ENCODE measurements at regions of chr2 and their contacts with region 1.

Region 1: DNA sequence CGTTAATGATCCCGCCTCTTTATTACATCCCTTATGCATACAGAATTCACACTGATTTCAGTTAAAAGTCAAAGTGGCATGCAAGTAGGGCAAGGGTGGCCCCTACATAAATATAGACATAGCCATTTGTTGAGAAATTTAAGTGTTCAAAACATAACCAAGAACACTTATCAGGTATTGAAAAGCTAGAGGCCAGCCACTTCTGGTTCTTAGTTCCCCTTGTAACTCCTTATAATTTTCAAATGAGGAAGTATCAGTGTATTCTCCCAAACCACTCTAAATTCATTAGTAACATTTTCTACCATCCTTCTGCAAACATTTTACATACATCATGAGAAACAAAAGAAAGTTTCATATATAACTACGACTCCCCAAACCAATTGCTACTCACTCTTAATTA is 5.8 kb upstream of the ARL5A start:
- DNase-seq: no peak
- ATAC-seq: no peak
- H3K4me3 ChIP-seq: no peak overlapping the region
- H3K27ac ChIP-seq: no peak overlapping the region
- H3K4me1 ChIP-seq: peaks cover 0 to 9% (median 3%) of the 10 kb centered on the region in 12 donors
- H3K27me3 ChIP-seq: no peaks in the 10 kb centered on the region
- CTCF ChIP-seq: no peak
- POLR2A ChIP-seq: no peak

Region 2: GRCh38 chr2:151918308-151918707 is 84.3 kb after region 1 on chr2:
- intact Hi-C with region 1: loop called in 1 of 10 experiments (anchors 5 kb)
- DNase-seq: peak in 1 of 5 donors; percentile 28
- ATAC-seq: peak; percentile 45 to 85 (median 82)
- H3K4me3 ChIP-seq: no peak overlapping the region
- H3K27ac ChIP-seq: peak overlapping the region in 1 of 12 donors; percentile 53
- H3K4me1 ChIP-seq: peaks cover 0 to 61% (median 17%) of the 10 kb centered on the region in 12 donors
- H3K27me3 ChIP-seq: no peaks in the 10 kb centered on the region
- CTCF ChIP-seq: no peak
- POLR2A ChIP-seq: no peak

Region 3: GRCh38 chr2:151946899-151947822 is 113.2 kb after region 1 on chr2:
- intact Hi-C with region 1: loop called in 1 of 10 experiments (anchors 5 kb)
- DNase-seq: peak in 4 of 5 donors; percentile 29 to 58 (median 38)
- ATAC-seq: peak; percentile 15 to 77 (median 74)
- H3K4me3 ChIP-seq: peak overlapping the region in 9 of 12 donors; percentile 12 to 51 (median 39)
- H3K27ac ChIP-seq: peak overlapping the region in 4 of 12 donors; percentile 4 to 40 (median 22)
- H3K4me1 ChIP-seq: peaks cover 0 to 18% (median 7%) of the 10 kb centered on the region in 12 donors
- H3K27me3 ChIP-seq: no peaks in the 10 kb centered on the region
- CTCF ChIP-seq: peak; percentile 44 to 79 (median 61)
- POLR2A ChIP-seq: no peak